Naive thymus-derived CD4-positive, alpha-beta T cell (primary cell): ENCODE measurements at regions of chr1 and their contacts with region 1.

Region 1: GRCh38 chr1:205211169-205211838 is at the start of gene DSTYK:
- DNase-seq: peak; percentile 77 to 95 (median 93)
- ATAC-seq: peak; percentile 95
- H3K4me3 ChIP-seq: peak within 1 kb of the TSS; percentile 75
- H3K4me3 Mint-ChIP-seq: peak within 1 kb of the TSS; percentile 89 to 98 (median 96)
- H3K27ac ChIP-seq: peak within 1 kb of the TSS; percentile 87
- H3K27ac Mint-ChIP-seq: peak within 1 kb of the TSS; percentile 95 to 99 (median 98)
- H3K4me1 ChIP-seq: peaks cover 8% of the 10 kb centered on the region in 2 donors
- H3K4me1 Mint-ChIP-seq: peaks cover 12 to 66% (median 54%) of the 10 kb centered on the region in 7 donors
- H3K27me3 ChIP-seq: no peaks in the 10 kb centered on the region
- H3K27me3 Mint-ChIP-seq: peaks cover 0 to 4% (median 0%) of the 10 kb centered on the region in 5 donors
- total RNA-seq, gene DSTYK: 11.3 to 18.5 (median 15.2) TPM

Region 2: GRCh38 chr1:205121660-205122488 is 89.4 kb before region 1 on chr1 and contains the start of gene RBBP5:
- CTCF ChIA-PET with region 1: interaction called, 3 read pairs
- POLR2A ChIA-PET with region 1: interaction called, 11 read pairs
- intact Hi-C with region 1: loop called (anchors 1 kb)
- DNase-seq: peak; percentile 87 to 97 (median 93)
- ATAC-seq: peak; percentile 98
- H3K4me3 ChIP-seq: peak within 1 kb of the TSS; percentile 89
- H3K4me3 Mint-ChIP-seq: peak within 1 kb of the TSS; percentile 89 to 99 (median 96)
- H3K27ac ChIP-seq: peak within 1 kb of the TSS; percentile 86
- H3K27ac Mint-ChIP-seq: peak within 1 kb of the TSS; percentile 98 to 100 (median 99)
- H3K4me1 ChIP-seq: peaks cover 18 to 24% of the 10 kb centered on the region in 2 donors
- H3K4me1 Mint-ChIP-seq: peaks cover 30 to 56% (median 51%) of the 10 kb centered on the region in 7 donors
- H3K27me3 ChIP-seq: no peaks in the 10 kb centered on the region
- H3K27me3 Mint-ChIP-seq: no peaks in the 10 kb centered on the region
- total RNA-seq, gene RBBP5: 11.0 to 31.5 (median 21.0) TPM

Region 3: DNA sequence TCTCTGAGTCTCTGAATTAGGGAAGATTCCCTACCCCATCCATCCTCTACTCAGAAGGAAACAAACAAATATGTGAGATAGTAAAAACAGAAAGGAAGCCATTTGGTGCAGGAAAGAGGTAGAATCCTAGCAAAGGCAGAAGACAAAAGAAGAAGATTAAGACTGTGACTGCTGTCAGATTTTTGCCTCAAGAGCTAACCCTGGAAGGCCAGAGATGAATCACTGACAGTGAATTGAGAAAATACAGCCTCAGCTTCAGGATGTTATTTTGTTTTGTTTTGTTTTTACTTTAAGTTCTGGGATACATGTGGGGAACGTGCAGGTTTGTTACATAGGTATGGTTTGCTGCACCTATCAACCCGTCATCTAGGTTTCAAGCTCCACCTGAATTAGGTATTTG is 31.5 kb before region 1 on chr1:
- CTCF ChIA-PET with region 1: no interaction called
- POLR2A ChIA-PET with region 1: no interaction called
- intact Hi-C with region 1: loop called in 1 of 2 experiments (anchors 5 kb)
- DNase-seq: no peak
- ATAC-seq: no peak
- H3K4me3 ChIP-seq: no peak overlapping the region
- H3K4me3 Mint-ChIP-seq: no peak overlapping the region
- H3K27ac ChIP-seq: no peak overlapping the region
- H3K27ac Mint-ChIP-seq: peak overlapping the region in 1 of 9 donors; percentile 61
- H3K4me1 ChIP-seq: peaks cover 0 to 14% of the 10 kb centered on the region in 2 donors
- H3K4me1 Mint-ChIP-seq: peaks cover 14 to 29% (median 22%) of the 10 kb centered on the region in 7 donors
- H3K27me3 ChIP-seq: no peaks in the 10 kb centered on the region
- H3K27me3 Mint-ChIP-seq: no peaks in the 10 kb centered on the region

Region 4: DNA sequence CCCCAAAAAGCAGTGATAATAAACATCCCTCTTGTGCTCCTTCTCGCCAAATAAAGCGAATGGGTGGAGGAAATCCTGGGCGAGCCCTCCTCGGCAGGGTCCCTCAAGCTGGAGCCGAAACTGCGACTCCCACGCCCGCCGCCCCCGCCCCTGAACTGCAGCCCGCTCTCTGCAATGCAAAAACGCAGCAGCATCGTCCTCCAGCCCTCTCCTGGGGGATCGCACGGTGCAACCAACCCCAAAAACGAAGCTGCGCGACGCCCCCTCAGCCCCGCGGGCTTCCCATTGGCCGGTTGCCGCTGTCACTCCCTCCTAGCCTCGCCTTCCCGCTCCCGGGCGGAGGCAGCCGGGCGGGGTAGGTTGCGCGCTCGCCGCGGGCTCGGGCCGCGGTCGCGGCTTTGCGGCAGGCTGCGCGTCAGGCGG is 16.3 kb after region 1 on chr1 and contains the start of gene TMCC2:
- CTCF ChIA-PET with region 1: interaction called, 3 read pairs
- POLR2A ChIA-PET with region 1: interaction called, 30 read pairs
- intact Hi-C with region 1: loop called (anchors 1 kb)
- DNase-seq: peak; percentile 57 to 87 (median 73)
- ATAC-seq: peak; percentile 86
- H3K4me3 ChIP-seq: peak within 1 kb of the TSS; percentile 75
- H3K4me3 Mint-ChIP-seq: peak within 1 kb of the TSS; percentile 86 to 99 (median 94)
- H3K27ac ChIP-seq: peak within 1 kb of the TSS; percentile 1
- H3K27ac Mint-ChIP-seq: peak within 1 kb of the TSS; percentile 43 to 90 (median 82)
- H3K4me1 ChIP-seq: peaks cover 10 to 13% of the 10 kb centered on the region in 2 donors
- H3K4me1 Mint-ChIP-seq: peaks cover 12 to 51% (median 18%) of the 10 kb centered on the region in 7 donors
- H3K27me3 ChIP-seq: no peaks in the 10 kb centered on the region
- H3K27me3 Mint-ChIP-seq: peaks cover 0 to 44% (median 4%) of the 10 kb centered on the region in 5 donors
- total RNA-seq, gene TMCC2: 1.1 to 3.6 (median 1.8) TPM

Region 5: DNA sequence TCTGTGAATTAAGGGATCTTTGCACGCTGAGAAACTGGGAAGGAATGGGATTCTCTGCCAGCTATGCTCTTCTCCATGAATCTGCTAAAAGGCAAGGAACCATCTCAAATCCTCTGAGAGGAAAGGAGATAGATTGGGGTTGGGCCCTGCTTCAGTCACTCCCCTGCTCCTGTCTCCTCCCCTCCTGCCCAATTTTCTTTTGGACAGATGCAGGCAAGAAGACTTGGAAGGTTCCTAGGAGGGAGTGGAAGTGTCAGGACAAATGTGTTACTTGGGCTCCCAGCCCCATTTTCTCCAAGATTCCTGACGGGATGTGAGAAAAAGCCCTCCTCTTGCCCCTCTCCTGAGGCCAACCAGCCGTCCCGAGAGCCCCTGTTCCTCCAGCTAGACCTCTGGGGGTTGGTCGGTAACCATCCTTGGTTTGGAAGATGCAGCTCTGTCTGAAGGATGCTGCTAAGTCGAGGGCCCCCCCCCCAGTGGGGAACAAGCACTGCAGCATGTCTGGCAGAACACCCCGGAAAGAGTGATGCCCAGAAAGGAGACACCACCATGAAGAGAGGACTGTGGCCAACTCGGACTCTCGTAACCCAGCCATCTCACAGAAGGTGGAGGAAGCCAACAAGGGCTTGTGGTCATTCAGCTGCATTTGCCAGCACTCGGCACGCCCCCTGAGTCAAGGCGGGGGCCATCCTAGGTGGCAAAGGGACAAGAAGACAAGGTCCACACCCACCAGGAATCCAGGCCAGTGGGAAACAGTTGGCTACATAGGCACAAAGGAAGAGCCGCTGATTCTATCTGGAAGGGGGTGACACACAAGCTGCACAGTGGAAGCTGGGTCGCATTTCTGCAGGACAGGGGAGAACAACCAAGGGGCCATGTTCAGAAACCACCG is 336.9 kb after region 1 on chr1:
- CTCF ChIA-PET with region 1: no interaction called
- POLR2A ChIA-PET with region 1: no interaction called
- intact Hi-C with region 1: no loop called
- DNase-seq: no peak
- ATAC-seq: no peak
- H3K4me3 ChIP-seq: no peak overlapping the region
- H3K4me3 Mint-ChIP-seq: no peak overlapping the region
- H3K27ac ChIP-seq: no peak overlapping the region
- H3K27ac Mint-ChIP-seq: no peak overlapping the region
- H3K4me1 ChIP-seq: peaks cover 0 to 4% of the 10 kb centered on the region in 2 donors
- H3K4me1 Mint-ChIP-seq: peaks cover 0 to 8% (median 7%) of the 10 kb centered on the region in 7 donors
- H3K27me3 ChIP-seq: peaks cover 0 to 3% of the 10 kb centered on the region in 2 donors
- H3K27me3 Mint-ChIP-seq: peaks cover 47 to 64% (median 57%) of the 10 kb centered on the region in 5 donors